Activated CD4-positive, alpha-beta T cell treated with anti-CD3 and anti-CD28 coated beads for 36 hours (primary cell): ENCODE measurements at regions of chr19 and their contacts with region 1.

Region 1: GRCh38 chr19:56140583-56141416 is at the start of gene ZNF444:
- DNase-seq: peak; percentile 99
- ATAC-seq: peak; percentile 90
- H3K4me3 Mint-ChIP-seq: peak within 1 kb of the TSS; percentile 89
- H3K27ac Mint-ChIP-seq: peak within 1 kb of the TSS; percentile 94
- H3K4me1 Mint-ChIP-seq: peaks cover 31% of the 10 kb centered on the region
- H3K27me3 Mint-ChIP-seq: no peaks in the 10 kb centered on the region
- total RNA-seq, gene ZNF444: 29.2 to 32.2 TPM

Region 2: GRCh38 chr19:55857149-55857548 is 283.7 kb before region 1 on chr19:
- CTCF ChIA-PET with region 1: no interaction called
- POLR2A ChIA-PET with region 1: no interaction called
- intact Hi-C with region 1: no loop called
- DNase-seq: no peak
- ATAC-seq: no peak
- H3K4me3 Mint-ChIP-seq: no peak overlapping the region
- H3K27ac Mint-ChIP-seq: no peak overlapping the region
- H3K4me1 Mint-ChIP-seq: no peaks in the 10 kb centered on the region
- H3K27me3 Mint-ChIP-seq: no peaks in the 10 kb centered on the region

Region 3: GRCh38 chr19:56111601-56112312 is 29.0 kb before region 1 on chr19:
- CTCF ChIA-PET with region 1: interaction called, 4 read pairs
- POLR2A ChIA-PET with region 1: no interaction called
- intact Hi-C with region 1: loop called in 1 of 2 experiments (anchors 1 kb)
- DNase-seq: peak; percentile 91
- ATAC-seq: peak; percentile 99
- H3K4me3 Mint-ChIP-seq: peak overlapping the region; percentile 41
- H3K27ac Mint-ChIP-seq: peak overlapping the region; percentile 86
- H3K4me1 Mint-ChIP-seq: peaks cover 56% of the 10 kb centered on the region
- H3K27me3 Mint-ChIP-seq: no peaks in the 10 kb centered on the region

Region 4: DNA sequence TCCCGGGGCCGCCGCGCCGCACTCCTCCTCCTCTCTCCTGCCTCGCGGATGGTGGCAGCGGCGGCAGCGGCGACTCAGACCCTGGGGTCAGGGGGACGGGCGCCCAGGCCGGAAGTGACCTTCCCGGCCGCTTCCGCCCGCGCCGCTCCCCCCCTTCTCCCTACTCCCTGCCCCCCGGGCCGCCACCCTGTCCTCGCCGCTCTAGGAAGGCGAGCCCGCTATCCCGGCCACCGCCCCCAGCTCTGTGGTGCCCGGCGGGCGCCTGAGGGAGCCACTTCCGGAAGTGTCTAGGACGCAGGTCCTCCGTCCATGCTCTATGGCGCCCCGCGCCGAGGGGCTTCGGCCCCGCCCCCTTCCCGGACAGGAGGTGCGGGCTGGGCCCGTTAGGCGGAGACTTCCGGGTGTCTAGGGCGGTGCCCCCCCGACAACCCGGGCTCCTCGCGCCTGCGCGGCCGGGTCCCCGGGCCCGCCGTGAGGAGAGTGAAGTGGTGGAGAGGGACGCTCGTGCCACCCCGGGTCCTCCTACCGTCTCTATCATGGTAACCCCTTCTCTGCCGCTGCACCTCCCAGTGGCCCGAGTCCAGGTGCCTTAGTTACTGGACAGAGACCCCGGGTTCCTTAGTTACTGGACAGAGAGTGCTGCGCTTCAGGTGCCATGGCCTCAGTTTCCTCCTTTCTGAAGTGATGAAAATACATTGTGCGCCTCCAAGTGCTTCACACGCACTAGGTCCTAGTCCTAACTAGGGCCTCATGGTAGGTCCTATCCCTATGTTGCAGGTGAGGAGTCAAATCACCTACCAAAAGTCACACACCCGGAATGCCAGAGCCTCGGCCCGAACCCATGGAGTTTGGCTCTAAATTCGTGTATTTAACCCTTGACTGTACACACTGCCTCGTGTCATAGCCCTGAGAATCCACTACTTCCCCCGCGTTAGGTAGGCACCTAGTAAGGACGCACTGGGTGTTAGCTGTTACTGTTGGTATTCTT is 19.3 kb before region 1 on chr19 and contains the start of gene ZNF787:
- CTCF ChIA-PET with region 1: interaction called, 4 read pairs
- POLR2A ChIA-PET with region 1: interaction called, 19 read pairs
- intact Hi-C with region 1: loop called (anchors 1 kb)
- DNase-seq: peak; percentile 98
- ATAC-seq: peak; percentile 92
- H3K4me3 Mint-ChIP-seq: peak within 1 kb of the TSS; percentile 82
- H3K27ac Mint-ChIP-seq: peak within 1 kb of the TSS; percentile 91
- H3K4me1 Mint-ChIP-seq: peaks cover 48% of the 10 kb centered on the region
- H3K27me3 Mint-ChIP-seq: no peaks in the 10 kb centered on the region
- total RNA-seq, gene ZNF787: 27.6 to 28.4 TPM

Region 5: GRCh38 chr19:57075801-57076745 is 935.3 kb after region 1 on chr19:
- CTCF ChIA-PET with region 1: no interaction called
- POLR2A ChIA-PET with region 1: no interaction called
- intact Hi-C with region 1: no loop called
- DNase-seq: no peak
- ATAC-seq: no peak
- H3K4me3 Mint-ChIP-seq: no peak overlapping the region
- H3K27ac Mint-ChIP-seq: no peak overlapping the region
- H3K4me1 Mint-ChIP-seq: no peaks in the 10 kb centered on the region
- H3K27me3 Mint-ChIP-seq: no peaks in the 10 kb centered on the region